ENCODE measurements at regions of chr5 and their contacts with region 1.

Region 1: DNA sequence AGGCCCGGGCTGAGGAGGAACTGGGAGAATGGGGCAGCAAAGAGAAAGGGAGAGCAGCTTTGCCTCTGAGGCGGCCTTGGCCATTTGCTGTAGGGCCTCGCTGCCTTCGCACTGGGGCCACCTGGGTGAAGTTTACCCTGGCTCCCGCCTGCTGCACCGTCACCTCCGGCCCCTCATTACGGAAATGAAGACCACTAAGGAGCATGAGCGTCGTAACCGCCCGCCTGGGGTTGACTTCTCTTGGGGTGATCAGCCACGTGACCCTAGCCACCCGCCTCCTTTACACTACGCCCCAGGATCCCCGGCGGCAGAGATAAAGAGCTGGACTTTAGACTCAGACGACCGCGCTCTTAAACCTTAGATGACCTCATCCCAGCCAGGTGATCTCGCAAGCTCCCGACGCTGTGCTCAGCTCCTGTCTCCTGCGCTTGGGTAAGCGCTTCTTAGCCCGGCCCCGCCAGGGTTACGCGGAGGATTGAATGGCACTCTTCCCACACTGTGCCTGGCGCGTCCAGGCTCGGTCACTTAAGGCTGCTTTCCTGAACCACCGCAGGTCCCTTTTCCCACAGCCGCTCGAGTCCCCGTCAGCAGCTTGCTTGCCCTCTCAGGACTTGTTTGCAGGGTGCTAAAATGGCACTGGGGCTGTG is 107.9 kb upstream of the LARP1 start:
- DNase-seq: peak; percentile 38
- ATAC-seq: peak; percentile 70
- H3K4me3 ChIP-seq: peak overlapping the region; percentile 46
- H3K27ac ChIP-seq: no peak overlapping the region
- H3K4me1 ChIP-seq: 0 out of 2 replicates have a peak, but pooled peaks cover 4% of the 10 kb centered on the region
- H3K27me3 ChIP-seq: no peaks in the 10 kb centered on the region
- CTCF ChIP-seq: no peak

Region 2: GRCh38 chr5:154038707-154039457 is 608.4 kb before region 1 on chr5 and contains the starts of genes FAM114A2 and MFAP3:
- CTCF ChIA-PET with region 1: no interaction called
- POLR2A ChIA-PET with region 1: interaction called, 15 read pairs
- intact Hi-C with region 1: no loop called
- DNase-seq: peak; percentile 85
- ATAC-seq: peak; percentile 100
- H3K4me3 ChIP-seq: peak within 1 kb of the TSS; percentile 99
- H3K27ac ChIP-seq: peak within 1 kb of the TSS; percentile 61
- H3K4me1 ChIP-seq: peaks cover 14% of the 10 kb centered on the region
- H3K27me3 ChIP-seq: no peaks in the 10 kb centered on the region
- CTCF ChIP-seq: no peak
- total RNA-seq, gene FAM114A2: 6.0 and 12.9 TPM in 2 replicates
- total RNA-seq, gene MFAP3: 17.7 and 21.1 TPM in 2 replicates

Region 3: DNA sequence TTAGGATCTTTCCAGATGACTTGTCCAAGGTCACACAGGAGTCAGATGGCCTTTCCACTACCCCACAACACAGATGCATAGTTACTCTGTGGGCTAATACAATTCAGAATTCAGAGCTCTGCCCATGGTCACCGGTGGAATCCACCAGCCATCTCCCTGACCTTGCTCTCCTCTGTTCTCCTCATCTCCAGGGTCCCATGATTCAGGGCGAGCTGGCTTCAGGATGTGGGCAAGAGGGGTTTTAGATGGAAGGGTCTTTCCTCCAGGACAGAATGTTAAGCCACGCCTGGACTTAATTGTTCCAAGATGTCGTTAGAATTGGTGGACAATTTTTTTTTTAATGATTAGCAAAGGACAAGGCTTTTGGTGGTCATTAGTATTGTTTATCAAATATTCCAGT is 26.3 kb after region 1 on chr5:
- CTCF ChIA-PET with region 1: no interaction called
- POLR2A ChIA-PET with region 1: no interaction called
- intact Hi-C with region 1: no loop called
- DNase-seq: no peak
- ATAC-seq: no peak
- H3K4me3 ChIP-seq: no peak overlapping the region
- H3K27ac ChIP-seq: no peak overlapping the region
- H3K4me1 ChIP-seq: no peaks in the 10 kb centered on the region
- H3K27me3 ChIP-seq: no peaks in the 10 kb centered on the region
- CTCF ChIP-seq: no peak

Region 4: GRCh38 chr5:154811653-154812365 is 164.6 kb after region 1 on chr5:
- CTCF ChIA-PET with region 1: no interaction called
- POLR2A ChIA-PET with region 1: no interaction called
- intact Hi-C with region 1: loop called (anchors 1 kb)
- DNase-seq: peak; percentile 52
- ATAC-seq: peak; percentile 72
- H3K4me3 ChIP-seq: no peak overlapping the region
- H3K27ac ChIP-seq: no peak overlapping the region
- H3K4me1 ChIP-seq: no peaks in the 10 kb centered on the region
- H3K27me3 ChIP-seq: no peaks in the 10 kb centered on the region
- CTCF ChIP-seq: peak; percentile 87

Region 5: DNA sequence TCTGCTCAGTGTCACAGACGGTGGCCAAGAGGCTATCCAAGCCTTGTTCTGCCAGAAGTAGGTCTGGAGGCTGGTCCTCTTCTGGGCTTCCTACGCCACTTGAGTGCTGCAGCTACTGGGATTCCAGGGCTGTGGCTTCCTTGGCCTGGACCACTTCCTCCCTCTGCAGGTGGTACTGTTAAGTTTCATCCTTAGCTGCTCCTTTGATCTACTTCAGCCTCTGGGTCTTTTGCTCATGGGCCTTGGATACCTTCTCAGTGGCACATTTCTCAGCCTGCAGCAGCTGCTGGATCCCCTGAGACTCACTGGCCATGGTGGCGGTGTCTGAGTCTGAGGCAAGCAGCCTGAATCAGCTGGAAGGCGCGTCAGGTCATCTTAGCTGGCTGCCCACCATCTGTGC is 221.5 kb after region 1 on chr5:
- CTCF ChIA-PET with region 1: interaction called, 3 read pairs
- POLR2A ChIA-PET with region 1: no interaction called
- intact Hi-C with region 1: loop called (anchors 1 kb)
- DNase-seq: peak; percentile 7
- ATAC-seq: peak; percentile 33; the same call in 1 of the 2 replicates
- H3K4me3 ChIP-seq: no peak overlapping the region
- H3K27ac ChIP-seq: no peak overlapping the region
- H3K4me1 ChIP-seq: no peaks in the 10 kb centered on the region
- H3K27me3 ChIP-seq: no peaks in the 10 kb centered on the region
- CTCF ChIP-seq: peak; percentile 33; the same call in 1 of the 2 replicates